Endothelial cell of umbilical vein (primary cell): ENCODE measurements at regions of chr4 and their contacts with region 1.

Region 1: GRCh38 chr4:158259955-158260575 is 49.8 kb downstream of the TMEM144 start:
- DNase-seq: peak; percentile 53
- H3K4me3 ChIP-seq: no peak overlapping the region
- H3K27ac ChIP-seq: no peak overlapping the region
- H3K4me1 ChIP-seq: no peaks in the 10 kb centered on the region
- H3K27me3 ChIP-seq: no peaks in the 10 kb centered on the region
- CTCF ChIP-seq: peak in 1 of 2 donors; percentile 7
- POLR2A ChIP-seq: no peak

Region 2: GRCh38 chr4:158578476-158578875 is 318.4 kb after region 1 on chr4:
- CTCF ChIA-PET with region 1: interaction called, 5 read pairs
- POLR2A ChIA-PET with region 1: no interaction called
- dilution Hi-C with region 1: no loop called
- intact Hi-C with region 1: loop called (anchors 1 kb)
- DNase-seq: peak; percentile 52
- H3K4me3 ChIP-seq: no peak overlapping the region
- H3K27ac ChIP-seq: no peak overlapping the region
- H3K4me1 ChIP-seq: no peaks in the 10 kb centered on the region
- H3K27me3 ChIP-seq: no peaks in the 10 kb centered on the region
- CTCF ChIP-seq: peak; percentile 27 to 45
- POLR2A ChIP-seq: no peak